ENCODE measurements at regions of chrX and their contacts with region 1.

Region 1: GRCh38 chrX:11533211-11533651 is 132.5 kb downstream of the ARHGAP6 start:
- DNase-seq: peak; percentile 55
- H3K4me3 ChIP-seq: no peak overlapping the region
- H3K27ac ChIP-seq: no peak overlapping the region
- H3K4me1 ChIP-seq: no peaks in the 10 kb centered on the region
- H3K27me3 ChIP-seq: no peaks in the 10 kb centered on the region
- CTCF ChIP-seq: peak in 2 of 3 experiments; percentile 54 to 65

Region 2: GRCh38 chrX:11151799-11152559 is 381.3 kb before region 1 on chrX:
- dilution Hi-C with region 1: loop called (anchors 25 kb)
- DNase-seq: no peak
- H3K4me3 ChIP-seq: no peak overlapping the region
- H3K27ac ChIP-seq: no peak overlapping the region
- H3K4me1 ChIP-seq: no peaks in the 10 kb centered on the region
- H3K27me3 ChIP-seq: no peaks in the 10 kb centered on the region
- CTCF ChIP-seq: no peak

Region 3: DNA sequence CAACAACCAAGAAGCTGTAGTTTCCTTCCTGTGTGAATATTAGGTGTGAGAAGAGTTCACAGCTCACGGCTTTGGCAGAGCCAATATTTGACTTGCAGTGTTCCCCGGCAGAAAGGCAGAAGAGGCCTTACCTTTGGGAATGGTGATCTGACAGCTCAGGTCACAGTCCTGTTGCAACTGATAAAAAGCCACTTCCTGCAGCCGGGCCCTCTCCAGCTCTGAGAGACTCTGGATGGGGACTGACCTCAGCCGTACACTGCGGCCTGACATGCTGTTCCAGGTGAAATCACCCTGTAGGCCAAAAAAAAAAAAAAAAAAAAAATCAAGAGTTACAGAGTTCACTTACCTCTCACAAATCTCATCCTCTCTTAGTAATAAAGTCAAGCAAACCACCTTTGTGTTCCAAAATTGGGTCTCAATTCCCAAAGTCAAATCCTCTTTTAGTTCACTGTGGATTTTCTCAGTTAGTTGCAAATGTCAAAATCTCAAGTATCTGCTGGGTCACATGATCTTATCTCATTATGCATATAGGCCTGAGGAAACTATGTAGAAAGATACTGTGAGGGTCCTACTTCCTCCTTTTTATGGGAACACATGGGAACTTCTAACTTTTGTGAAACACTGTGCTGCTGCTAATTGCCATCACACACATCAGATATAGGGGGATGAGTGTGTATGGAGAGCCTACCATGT is 278.7 kb before region 1 on chrX:
- dilution Hi-C with region 1: no loop called
- DNase-seq: no peak
- H3K4me3 ChIP-seq: no peak overlapping the region
- H3K27ac ChIP-seq: no peak overlapping the region
- H3K4me1 ChIP-seq: no peaks in the 10 kb centered on the region
- H3K27me3 ChIP-seq: no peaks in the 10 kb centered on the region
- CTCF ChIP-seq: no peak

Region 4: GRCh38 chrX:11739776-11740175 is 206.5 kb after region 1 on chrX:
- dilution Hi-C with region 1: no loop called
- DNase-seq: no peak
- H3K4me3 ChIP-seq: no peak overlapping the region
- H3K27ac ChIP-seq: no peak overlapping the region
- H3K4me1 ChIP-seq: no peaks in the 10 kb centered on the region
- H3K27me3 ChIP-seq: no peaks in the 10 kb centered on the region
- CTCF ChIP-seq: no peak